Cardiac septum (tissue), 1 donor: ENCODE measurements at regions of chr13 and their contacts with region 1.

Region 1: DNA sequence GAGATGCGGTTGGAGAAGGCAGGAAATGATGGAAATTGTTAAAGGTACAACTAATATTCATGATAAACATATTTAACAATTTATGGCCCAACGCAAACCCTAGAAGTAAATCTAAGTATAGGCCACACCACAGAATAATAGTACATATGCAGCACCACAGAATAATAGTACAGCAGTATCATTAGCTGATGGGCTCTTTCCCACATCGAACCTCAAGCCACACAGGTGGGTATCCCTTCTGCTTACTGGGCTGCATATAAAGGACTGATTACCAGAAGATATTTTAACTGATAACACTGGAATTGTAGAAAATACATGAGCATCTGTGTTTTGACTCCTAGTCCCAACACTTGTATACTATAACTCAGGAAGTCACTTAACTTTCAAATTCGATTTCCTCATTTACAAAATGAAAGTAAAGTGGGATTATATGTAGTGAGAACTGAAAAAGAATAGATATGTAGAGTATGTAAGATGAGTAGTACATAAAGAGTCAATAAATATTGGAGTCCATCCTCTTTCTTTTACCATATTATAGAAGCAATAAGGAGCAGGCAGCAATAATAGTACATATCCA is 91.5 kb downstream of the TSC22D1 start:
- DNase-seq: no peak

Region 2: GRCh38 chr13:44879463-44880058 is 394.9 kb after region 1 on chr13:
- intact Hi-C with region 1: loop called (anchors 10 kb)
- DNase-seq: no peak